Dorsolateral prefrontal cortex (tissue), 120 donors: ENCODE measurements at regions of chr4 and their contacts with region 1.

Region 1: DNA sequence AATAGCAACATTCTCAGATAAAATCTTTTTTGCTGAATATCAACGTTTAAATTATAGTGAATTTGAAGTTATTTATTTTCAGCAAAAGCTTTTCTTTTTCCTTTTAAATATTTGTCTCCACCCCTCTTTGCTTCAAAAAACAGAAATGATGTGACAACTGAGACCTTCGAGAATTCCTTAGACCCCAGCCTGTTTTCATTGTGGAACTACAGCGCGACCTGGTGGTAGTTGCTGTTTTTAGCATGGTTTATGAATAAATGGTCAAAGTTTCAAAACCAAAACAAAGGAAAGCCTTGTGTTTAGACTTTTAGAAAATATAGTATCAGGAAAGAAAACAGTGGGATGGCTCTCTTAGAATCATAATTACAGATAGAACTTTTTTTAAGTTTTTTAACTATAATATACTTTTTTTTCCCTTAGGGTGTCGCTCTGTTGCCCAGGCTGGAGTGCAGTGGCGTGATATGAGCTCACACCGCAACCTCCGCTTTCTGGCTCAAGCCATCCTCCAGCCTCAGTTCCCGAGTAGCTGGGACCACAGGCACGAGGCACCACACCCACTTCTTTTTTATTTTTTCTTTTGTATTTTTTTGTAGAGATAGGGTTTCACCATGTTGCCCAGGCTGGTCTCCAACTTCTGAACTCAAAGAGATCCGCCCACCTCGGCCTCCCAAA is 26.8 kb upstream of the TMEM184C start:
- DNase-seq: peak in 8 of 10 donors; percentile 17 to 83 (median 52)
- H3K4me3 ChIP-seq: peak overlapping the region in 43 of 59 donors; percentile 1 to 49 (median 28)
- H3K27ac ChIP-seq: peak overlapping the region in 40 of 59 donors; percentile 2 to 97 (median 62)
- H3K27me3 ChIP-seq: no peaks in the 10 kb centered on the region
- CTCF ChIP-seq: peak; percentile 66 to 94 (median 86)

Region 2: GRCh38 chr4:147019061-147019460 is 571.3 kb before region 1 on chr4:
- intact Hi-C with region 1: loop called in 1 of 2 experiments (anchors 5 kb)
- DNase-seq: peak in 7 of 10 donors; percentile 11 to 85 (median 65)
- H3K4me3 ChIP-seq: no peak overlapping the region
- H3K27ac ChIP-seq: no peak overlapping the region
- H3K27me3 ChIP-seq: no peaks in the 10 kb centered on the region
- CTCF ChIP-seq: peak; percentile 19 to 92 (median 72)

Region 3: DNA sequence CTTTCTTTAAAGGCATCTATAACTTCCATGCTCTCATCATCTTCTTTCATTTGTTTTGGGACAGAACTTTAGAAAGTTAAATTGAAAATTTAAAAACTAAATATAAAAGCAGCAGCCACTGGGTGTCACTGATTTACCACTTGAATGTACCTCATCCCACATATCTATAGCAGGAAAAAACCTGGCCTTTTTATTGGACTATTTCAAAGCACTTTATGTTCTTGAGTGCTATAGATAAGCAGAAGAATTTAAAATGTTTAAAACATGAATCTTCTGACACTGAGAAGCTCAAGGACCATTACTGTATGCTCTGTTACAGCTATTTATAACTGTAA is 479.4 kb before region 1 on chr4:
- intact Hi-C with region 1: loop called in 1 of 2 experiments (anchors 10 kb)
- DNase-seq: no peak
- H3K4me3 ChIP-seq: no peak overlapping the region
- H3K27ac ChIP-seq: no peak overlapping the region
- H3K27me3 ChIP-seq: no peaks in the 10 kb centered on the region
- CTCF ChIP-seq: peak in 41 of 56 donors; percentile 9 to 57 (median 34)

Region 4: GRCh38 chr4:147160908-147161513 is 429.4 kb before region 1 on chr4:
- intact Hi-C with region 1: loop called (anchors 5 kb)
- DNase-seq: peak in 1 of 10 donors; percentile 25
- H3K4me3 ChIP-seq: no peak overlapping the region
- H3K27ac ChIP-seq: no peak overlapping the region
- H3K27me3 ChIP-seq: no peaks in the 10 kb centered on the region
- CTCF ChIP-seq: peak; percentile 45 to 83 (median 72)

Region 5: DNA sequence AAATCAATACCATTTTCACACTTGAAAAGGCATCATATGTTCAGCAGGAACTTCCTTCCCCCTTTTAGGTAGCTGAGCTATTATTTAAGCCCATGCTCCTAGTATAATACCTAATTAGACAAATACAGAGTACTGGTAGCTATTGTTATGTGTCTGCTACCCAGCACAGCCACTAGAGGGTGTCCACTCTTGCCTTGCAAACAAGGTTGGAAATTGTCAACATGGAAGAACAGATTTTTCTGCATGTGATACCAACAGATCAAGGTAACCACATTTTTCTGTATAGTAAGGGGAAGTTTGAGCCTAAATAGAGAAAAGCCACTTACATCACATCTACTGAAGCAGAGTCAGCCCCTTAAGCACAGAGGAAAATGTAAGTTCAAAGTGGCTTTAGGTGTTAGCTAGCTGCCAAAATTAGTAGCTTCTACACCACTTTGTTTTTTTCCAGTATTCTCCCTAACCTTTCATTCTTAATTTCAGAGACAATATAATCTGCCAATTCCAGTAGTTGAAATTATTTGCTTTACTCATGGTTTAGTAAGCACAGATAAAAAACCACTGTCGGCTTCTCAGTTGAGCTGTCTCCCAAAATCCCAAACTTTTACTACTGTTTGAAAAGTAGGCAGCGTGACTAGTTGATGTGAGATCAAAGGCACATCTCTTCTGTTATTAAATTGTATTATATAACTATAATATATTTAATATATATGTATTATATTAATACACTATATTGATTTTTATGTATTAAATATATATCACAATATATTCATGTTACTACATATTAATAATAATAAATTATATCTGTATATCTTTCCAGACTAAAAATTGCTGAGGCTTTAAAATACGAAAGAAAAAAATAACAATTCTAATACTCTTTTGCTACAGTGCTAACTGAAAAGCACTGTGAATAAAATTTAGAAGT is 71.3 kb before region 1 on chr4:
- intact Hi-C with region 1: loop called in 1 of 2 experiments (anchors 2 kb)
- DNase-seq: peak in 7 of 10 donors; percentile 14 to 81 (median 52)
- H3K4me3 ChIP-seq: no peak overlapping the region
- H3K27ac ChIP-seq: no peak overlapping the region
- H3K27me3 ChIP-seq: no peaks in the 10 kb centered on the region
- CTCF ChIP-seq: peak; percentile 61 to 94 (median 80)

Region 6: GRCh38 chr4:147617173-147617840 is 26.9 kb after region 1 on chr4 and contains the start of gene TMEM184C:
- intact Hi-C with region 1: loop called in 1 of 2 experiments (anchors 2 kb)
- DNase-seq: peak; percentile 97 to 99 (median 98)
- H3K4me3 ChIP-seq: peak within 1 kb of the TSS; percentile 62 to 99 (median 90)
- H3K27ac ChIP-seq: peak within 1 kb of the TSS in 57 of 59 donors; percentile 12 to 92 (median 78)
- H3K27me3 ChIP-seq: no peaks in the 10 kb centered on the region
- CTCF ChIP-seq: peak in 28 of 56 donors; percentile 4 to 52 (median 30)
- total RNA-seq, gene TMEM184C: 24.9 to 69.1 (median 35.0) TPM